Calu3 (cell line): ENCODE measurements at regions of chr7 and their contacts with region 1.

Region 1: GRCh38 chr7:22549667-22550513 is 49.9 kb upstream of the STEAP1B start:
- DNase-seq: peak; percentile 90
- H3K4me3 Mint-ChIP-seq: peak overlapping the region; percentile 75
- H3K27ac Mint-ChIP-seq: peak overlapping the region; percentile 6
- H3K4me1 Mint-ChIP-seq: peaks cover 13% of the 10 kb centered on the region
- H3K27me3 Mint-ChIP-seq: peaks cover 100% of the 10 kb centered on the region
- CTCF ChIP-seq: peak; percentile 94

Region 2: DNA sequence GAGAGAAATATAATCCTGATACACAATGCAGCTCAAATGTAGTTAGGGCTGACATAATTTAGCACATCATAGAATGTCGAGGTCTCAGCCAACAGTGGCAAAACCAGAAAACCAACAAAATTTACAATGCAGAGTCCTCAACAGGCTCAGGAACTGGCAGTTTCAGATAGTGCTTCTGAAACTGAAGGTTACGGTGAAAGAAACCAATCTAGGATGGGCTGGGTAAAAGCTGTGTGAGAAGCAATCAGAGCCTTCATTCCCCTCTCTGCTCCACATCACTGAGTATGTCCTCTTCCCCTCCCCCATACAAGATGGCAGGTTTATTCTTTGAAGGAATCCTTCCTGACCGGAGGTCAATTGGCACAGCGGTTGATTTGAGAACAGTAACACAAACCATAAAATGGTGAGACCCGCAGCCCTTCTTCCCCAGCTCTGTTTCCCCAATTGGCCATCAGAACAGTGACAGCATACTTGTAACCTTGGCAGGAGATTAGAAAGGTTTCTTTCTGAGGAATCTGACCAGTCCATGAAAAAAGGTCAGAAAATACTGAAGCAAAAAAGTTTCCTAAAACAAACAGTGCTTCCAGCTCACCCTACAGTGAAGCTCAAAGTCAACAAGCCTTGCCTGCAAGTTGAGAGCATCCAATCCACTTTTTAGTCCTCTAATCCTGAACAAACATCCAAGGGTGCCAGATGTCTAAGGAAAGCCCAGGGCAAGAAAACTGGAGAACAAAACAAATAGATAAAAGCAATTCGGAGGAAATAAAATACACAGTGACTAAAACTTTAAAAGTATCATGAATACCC is 123.2 kb after region 1 on chr7:
- CTCF ChIA-PET with region 1: no interaction called
- intact Hi-C with region 1: no loop called
- DNase-seq: no peak
- H3K4me3 Mint-ChIP-seq: no peak overlapping the region
- H3K27ac Mint-ChIP-seq: no peak overlapping the region
- H3K4me1 Mint-ChIP-seq: peaks cover 46% of the 10 kb centered on the region
- H3K27me3 Mint-ChIP-seq: no peaks in the 10 kb centered on the region
- CTCF ChIP-seq: no peak

Region 3: DNA sequence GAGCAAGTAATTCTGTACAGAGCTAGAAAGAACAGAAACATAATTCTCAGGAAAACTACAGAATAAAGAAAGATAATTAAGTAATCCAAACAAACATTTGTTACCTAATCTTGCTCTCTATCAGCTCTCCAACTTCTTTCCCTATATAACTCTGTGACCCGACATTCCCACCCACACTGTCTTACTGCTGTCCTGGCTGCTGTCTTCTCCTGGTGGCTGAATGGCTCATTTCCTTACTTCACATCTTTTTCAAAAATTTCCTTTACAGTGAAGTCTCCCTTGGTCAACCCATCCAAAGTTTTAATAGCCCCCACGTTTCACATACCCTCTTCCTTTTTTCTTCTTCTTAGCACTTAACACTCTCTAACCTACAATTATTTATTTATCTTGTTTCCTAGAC is 400.1 kb after region 1 on chr7:
- CTCF ChIA-PET with region 1: no interaction called
- intact Hi-C with region 1: loop called (anchors 10 kb)
- DNase-seq: no peak
- H3K4me3 Mint-ChIP-seq: no peak overlapping the region
- H3K27ac Mint-ChIP-seq: no peak overlapping the region
- H3K4me1 Mint-ChIP-seq: no peaks in the 10 kb centered on the region
- H3K27me3 Mint-ChIP-seq: no peaks in the 10 kb centered on the region
- CTCF ChIP-seq: no peak

Region 4: GRCh38 chr7:23334482-23335056 is 784.7 kb after region 1 on chr7:
- CTCF ChIA-PET with region 1: no interaction called
- intact Hi-C with region 1: no loop called
- DNase-seq: peak; percentile 73
- H3K4me3 Mint-ChIP-seq: peak overlapping the region; percentile 20
- H3K27ac Mint-ChIP-seq: peak overlapping the region; percentile 77
- H3K4me1 Mint-ChIP-seq: peaks cover 53% of the 10 kb centered on the region
- H3K27me3 Mint-ChIP-seq: no peaks in the 10 kb centered on the region
- CTCF ChIP-seq: no peak